ENCODE measurements at regions of chr10 and their contacts with region 1.

Region 1: GRCh38 chr10:4141471-4141870 is 356.5 kb upstream of the KLF6 start:
- DNase-seq: no peak
- H3K4me3 ChIP-seq: no peak overlapping the region
- H3K27ac ChIP-seq: no peak overlapping the region
- H3K4me1 ChIP-seq: peaks cover 6% of the 10 kb centered on the region
- CTCF ChIP-seq: no peak

Region 2: GRCh38 chr10:3873728-3874461 is 267.6 kb before region 1 on chr10:
- CTCF ChIA-PET with region 1: no interaction called
- POLR2A ChIA-PET with region 1: no interaction called
- intact Hi-C with region 1: no loop called
- DNase-seq: peak; percentile 89
- H3K4me3 ChIP-seq: peak overlapping the region; percentile 14
- H3K27ac ChIP-seq: no peak overlapping the region
- H3K4me1 ChIP-seq: peaks cover 50% of the 10 kb centered on the region
- CTCF ChIP-seq: no peak

Region 3: GRCh38 chr10:3972460-3973301 is 168.8 kb before region 1 on chr10:
- CTCF ChIA-PET with region 1: no interaction called
- POLR2A ChIA-PET with region 1: interaction called, 14 read pairs
- intact Hi-C with region 1: no loop called
- DNase-seq: no peak
- H3K4me3 ChIP-seq: no peak overlapping the region
- H3K27ac ChIP-seq: no peak overlapping the region
- H3K4me1 ChIP-seq: peaks cover 7% of the 10 kb centered on the region
- CTCF ChIP-seq: no peak

Region 4: DNA sequence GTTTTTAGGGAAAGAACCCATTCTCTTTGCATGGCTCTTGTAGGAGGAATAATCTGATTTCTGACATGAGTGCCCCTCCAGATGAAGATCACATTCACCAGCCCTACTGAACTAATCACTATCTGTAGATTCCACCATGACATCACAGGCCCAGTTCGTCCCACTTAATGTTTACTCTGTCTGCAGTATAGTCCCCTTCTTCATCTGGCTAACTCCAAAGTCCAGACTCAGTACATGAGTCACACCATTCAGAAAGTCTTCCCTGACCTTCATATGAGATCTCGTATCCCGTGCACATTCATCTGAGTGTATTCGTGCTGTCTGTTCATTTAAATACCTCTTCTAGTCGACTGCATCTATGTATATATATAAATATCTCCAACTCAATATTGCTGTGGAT is 318.1 kb after region 1 on chr10:
- CTCF ChIA-PET with region 1: no interaction called
- POLR2A ChIA-PET with region 1: no interaction called
- intact Hi-C with region 1: no loop called
- DNase-seq: no peak
- H3K4me3 ChIP-seq: no peak overlapping the region
- H3K27ac ChIP-seq: no peak overlapping the region
- H3K4me1 ChIP-seq: no peaks in the 10 kb centered on the region
- CTCF ChIP-seq: no peak

Region 5: GRCh38 chr10:4678023-4678950 is 536.8 kb after region 1 on chr10:
- CTCF ChIA-PET with region 1: no interaction called
- POLR2A ChIA-PET with region 1: no interaction called
- intact Hi-C with region 1: no loop called
- DNase-seq: no peak
- H3K4me3 ChIP-seq: no peak overlapping the region
- H3K27ac ChIP-seq: no peak overlapping the region
- H3K4me1 ChIP-seq: no peaks in the 10 kb centered on the region
- CTCF ChIP-seq: no peak

Measured in OCI-LY7 (cell line).